Aorta (tissue), 5 donors: ENCODE measurements at regions of chr14 and their contacts with region 1.

Region 1: GRCh38 chr14:88013750-88014349 is 8.9 kb downstream of the GPR65 start:
- DNase-seq: peak; percentile 76 to 79
- ATAC-seq: peak; percentile 91
- H3K4me3 ChIP-seq: no peak overlapping the region
- H3K27ac ChIP-seq: no peak overlapping the region
- H3K4me1 ChIP-seq: no peaks in the 10 kb centered on the region
- H3K27me3 ChIP-seq: no peaks in the 10 kb centered on the region

Region 2: DNA sequence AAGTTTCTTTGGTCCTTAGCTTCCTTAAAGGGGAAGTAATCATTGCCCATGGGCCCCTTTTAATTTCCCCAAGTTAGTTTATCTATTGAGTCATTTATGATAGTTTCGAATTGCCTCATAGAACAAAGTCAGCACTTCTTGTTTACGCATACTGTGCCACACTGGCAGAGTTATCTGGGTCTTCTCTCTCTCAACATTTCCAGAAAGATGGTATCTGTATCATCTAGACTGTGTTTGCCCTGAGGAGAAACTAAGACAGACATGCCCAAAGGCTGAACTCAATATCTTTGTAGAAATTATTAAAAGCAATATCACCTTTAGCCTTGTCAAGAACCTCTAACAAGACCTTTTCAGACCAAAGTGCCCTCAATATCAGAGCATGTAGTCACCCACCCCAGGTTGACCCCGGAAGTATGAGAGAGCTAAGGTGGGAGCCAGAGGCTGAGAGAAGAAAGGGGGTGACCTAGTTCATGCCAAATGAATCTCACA is 31.0 kb after region 1 on chr14:
- intact Hi-C with region 1: no loop called
- DNase-seq: no peak
- ATAC-seq: no peak
- H3K4me3 ChIP-seq: no peak overlapping the region
- H3K27ac ChIP-seq: no peak overlapping the region
- H3K4me1 ChIP-seq: no peaks in the 10 kb centered on the region
- H3K27me3 ChIP-seq: no peaks in the 10 kb centered on the region

Region 3: DNA sequence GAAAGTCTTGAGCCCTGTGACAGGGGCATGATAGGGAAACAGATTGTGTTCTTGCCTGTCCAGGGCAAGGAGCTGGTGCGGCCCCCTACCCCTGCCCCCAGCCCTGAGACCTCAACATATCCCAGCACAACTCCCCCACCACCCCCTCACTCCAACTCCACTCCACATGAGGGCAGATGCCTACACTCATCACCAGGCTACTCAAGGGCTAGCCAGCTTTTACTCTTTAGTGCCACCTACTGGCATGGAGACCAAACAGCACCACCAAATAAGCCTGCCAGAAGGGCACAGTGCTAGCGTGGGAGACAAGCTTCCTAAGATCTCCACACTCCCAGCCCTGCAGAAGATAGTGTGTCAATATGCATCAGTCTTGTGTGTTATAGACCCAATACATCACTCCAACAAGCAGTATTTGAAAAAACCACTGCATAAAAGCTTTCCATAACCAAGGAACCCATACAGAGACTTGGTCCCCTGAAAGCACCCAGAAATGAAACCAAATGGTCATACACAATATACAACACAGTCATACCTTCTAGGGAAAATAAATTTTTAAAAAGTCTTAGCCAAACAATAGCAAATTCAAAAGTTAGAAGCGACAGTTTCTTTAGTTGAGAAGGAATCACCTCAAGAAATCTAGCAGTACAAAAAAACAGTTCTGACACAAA is 154.8 kb after region 1 on chr14:
- intact Hi-C with region 1: loop called (anchors 5 to 10 kb)
- DNase-seq: no peak
- ATAC-seq: peak; percentile 73
- H3K4me3 ChIP-seq: no peak overlapping the region
- H3K27ac ChIP-seq: no peak overlapping the region
- H3K4me1 ChIP-seq: no peaks in the 10 kb centered on the region
- H3K27me3 ChIP-seq: no peaks in the 10 kb centered on the region

Region 4: DNA sequence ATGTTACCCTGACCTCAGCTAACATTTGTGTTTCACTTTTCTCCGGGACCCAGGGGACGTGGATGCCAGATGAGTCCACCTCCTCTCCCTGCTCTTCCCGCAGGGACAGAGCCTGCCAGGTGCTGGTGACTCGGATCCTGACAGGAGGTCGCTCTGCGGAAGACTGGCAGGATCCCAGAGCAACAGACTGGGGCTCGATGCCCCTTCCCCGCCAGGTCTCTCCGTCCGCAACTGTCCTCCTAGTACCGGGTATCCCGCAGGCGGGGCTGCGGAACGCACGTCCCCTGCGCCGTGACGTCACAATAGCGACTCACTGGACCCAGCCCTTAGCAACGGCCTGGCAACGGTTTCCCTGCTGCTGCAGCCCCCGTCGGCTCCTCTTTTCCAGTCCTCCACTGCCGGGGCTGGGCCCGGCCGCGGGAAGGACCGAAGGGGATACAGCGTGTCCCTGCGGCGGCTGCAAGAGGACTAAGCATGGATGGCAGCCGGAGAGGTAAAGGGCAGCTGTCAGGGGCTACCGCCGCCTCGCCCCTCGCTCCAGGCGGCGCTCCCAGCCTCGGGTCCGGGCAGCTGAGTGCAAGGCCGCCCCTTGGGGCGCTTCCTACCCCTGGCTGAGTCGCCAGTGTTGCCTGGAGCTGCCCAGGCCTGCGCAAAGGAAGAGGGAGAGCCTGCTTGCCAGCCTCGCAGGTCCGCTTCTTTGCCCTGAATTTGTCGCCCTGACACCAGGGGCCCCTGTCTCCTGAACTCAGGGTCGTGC is 371.7 kb after region 1 on chr14 and contains the start of gene SPATA7:
- intact Hi-C with region 1: loop called in 1 of 2 experiments (anchors 10 kb)
- DNase-seq: peak; percentile 97
- ATAC-seq: peak; percentile 98
- H3K4me3 ChIP-seq: peak within 1 kb of the TSS; percentile 60 to 95
- H3K27ac ChIP-seq: peak within 1 kb of the TSS; percentile 19 to 64
- H3K4me1 ChIP-seq: no peaks in the 10 kb centered on the region
- H3K27me3 ChIP-seq: no peaks in the 10 kb centered on the region
- total RNA-seq, gene SPATA7: 7.1 to 17.7 TPM